Mucosa of descending colon (tissue), 3 donors: ENCODE measurements at regions of chr20 and their contacts with region 1.

Region 1: DNA sequence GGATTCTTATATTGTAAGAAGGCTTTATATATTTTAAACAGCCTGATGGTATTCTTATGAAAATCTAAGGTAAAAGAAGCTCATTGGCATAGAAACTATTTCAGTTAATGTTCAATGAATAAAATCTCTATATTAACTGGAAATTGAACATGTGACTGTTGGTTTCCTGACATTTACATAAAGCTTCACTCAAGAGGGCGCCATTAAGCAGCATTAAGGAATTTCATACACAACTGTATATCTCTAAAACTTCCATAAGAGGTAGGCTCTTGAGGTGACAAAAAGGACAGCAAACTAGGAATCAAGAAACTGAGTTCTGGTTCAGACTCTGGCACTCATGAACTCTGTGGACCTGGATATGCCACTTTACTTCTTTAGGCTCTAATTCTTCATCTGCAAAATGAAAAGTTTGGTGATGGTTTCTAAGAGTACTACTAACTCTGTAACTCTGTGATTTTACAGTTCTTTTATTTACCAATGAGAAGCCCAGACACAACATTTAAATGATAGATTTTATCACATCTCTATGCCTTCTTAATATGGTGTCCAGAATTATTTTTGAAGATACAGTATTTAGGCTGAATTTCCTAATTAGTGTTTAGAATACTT is 147.5 kb downstream of the FLRT3 start:
- DNase-seq: peak in 1 of 3 donors; percentile 59
- ATAC-seq: peak; percentile 53
- H3K4me3 ChIP-seq: no peak overlapping the region
- H3K4me1 ChIP-seq: no peaks in the 10 kb centered on the region
- CTCF ChIP-seq: no peak

Region 2: GRCh38 chr20:14264869-14265268 is 75.0 kb after region 1 on chr20:
- intact Hi-C with region 1: loop called in 1 of 2 experiments (anchors 2 kb)
- DNase-seq: no peak
- ATAC-seq: peak; percentile 51
- H3K4me3 ChIP-seq: no peak overlapping the region
- H3K4me1 ChIP-seq: no peaks in the 10 kb centered on the region
- CTCF ChIP-seq: no peak

Region 3: GRCh38 chr20:14963262-14963663 is 773.4 kb after region 1 on chr20:
- intact Hi-C with region 1: no loop called
- DNase-seq: no peak
- ATAC-seq: no peak
- H3K4me3 ChIP-seq: no peak overlapping the region
- H3K4me1 ChIP-seq: no peaks in the 10 kb centered on the region
- CTCF ChIP-seq: no peak